ENCODE measurements at regions of chr16 and their contacts with region 1.

Region 1: DNA sequence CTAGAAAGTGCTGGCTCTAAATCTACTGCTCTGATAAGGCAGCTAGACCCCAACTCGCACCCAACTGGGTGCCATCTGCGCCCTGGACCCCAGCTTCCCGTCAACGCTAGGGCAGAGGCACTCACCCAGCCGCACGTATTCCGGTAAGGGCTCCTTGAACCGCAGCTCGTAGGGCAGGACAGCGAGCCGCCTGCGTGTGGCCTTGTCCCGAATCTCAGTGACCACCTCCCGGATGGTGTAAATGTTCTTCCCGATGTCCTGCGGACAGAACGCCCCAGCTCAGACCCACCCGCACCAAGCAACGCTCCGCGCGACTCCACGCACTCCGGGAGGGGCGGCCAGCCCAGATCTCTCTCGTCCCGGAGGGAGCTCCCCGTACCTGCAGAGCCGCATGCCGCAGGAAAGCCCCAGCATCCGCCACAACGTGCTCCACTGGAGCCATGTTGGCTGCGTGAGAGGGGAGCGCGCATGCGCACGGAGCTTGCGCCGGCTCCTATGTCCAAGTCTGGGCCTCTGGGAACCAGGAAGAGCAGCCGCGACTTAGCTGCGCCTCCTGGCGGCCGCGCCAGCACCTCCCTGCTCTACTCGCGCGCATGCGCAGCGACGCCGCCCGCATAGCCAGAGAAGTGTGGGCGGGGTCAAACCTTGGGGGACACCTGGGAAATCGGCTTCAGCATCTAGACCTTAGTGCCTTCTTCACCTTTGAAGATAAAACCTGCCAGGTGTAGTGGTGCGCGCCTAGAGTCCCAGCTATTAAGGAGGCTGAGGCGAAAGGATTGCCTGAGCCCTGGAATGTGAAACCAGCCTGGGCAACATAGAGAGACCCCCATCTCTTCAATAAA is at the start of gene NOB1:
- DNase-seq: peak; percentile 97 to 100 (median 98)
- ATAC-seq: peak; percentile 99
- H3K4me3 ChIP-seq: peak within 1 kb of the TSS; percentile 64 to 91
- H3K27ac ChIP-seq: peak within 1 kb of the TSS in 1 of 2 donors; percentile 75
- H3K4me1 ChIP-seq: peaks cover 11 to 29% of the 10 kb centered on the region in 2 donors
- H3K27me3 ChIP-seq: no peaks in the 10 kb centered on the region
- CTCF ChIP-seq: peak; percentile 94 to 98
- polyA plus RNA-seq, gene NOB1: 61.2 to 67.4 (median 63.0) TPM

Region 2: GRCh38 chr16:69396187-69397061 is 358.3 kb before region 1 on chr16:
- intact Hi-C with region 1: loop called in 1 of 2 experiments (anchors 10 kb)
- DNase-seq: peak in 3 of 4 donors; percentile 63 to 93 (median 87)
- ATAC-seq: peak; percentile 88
- H3K4me3 ChIP-seq: no peak overlapping the region
- H3K27ac ChIP-seq: peak overlapping the region; percentile 81 to 84
- H3K4me1 ChIP-seq: peaks cover 21 to 40% of the 10 kb centered on the region in 2 donors
- H3K27me3 ChIP-seq: no peaks in the 10 kb centered on the region
- CTCF ChIP-seq: peak; percentile 3 to 5

Region 3: DNA sequence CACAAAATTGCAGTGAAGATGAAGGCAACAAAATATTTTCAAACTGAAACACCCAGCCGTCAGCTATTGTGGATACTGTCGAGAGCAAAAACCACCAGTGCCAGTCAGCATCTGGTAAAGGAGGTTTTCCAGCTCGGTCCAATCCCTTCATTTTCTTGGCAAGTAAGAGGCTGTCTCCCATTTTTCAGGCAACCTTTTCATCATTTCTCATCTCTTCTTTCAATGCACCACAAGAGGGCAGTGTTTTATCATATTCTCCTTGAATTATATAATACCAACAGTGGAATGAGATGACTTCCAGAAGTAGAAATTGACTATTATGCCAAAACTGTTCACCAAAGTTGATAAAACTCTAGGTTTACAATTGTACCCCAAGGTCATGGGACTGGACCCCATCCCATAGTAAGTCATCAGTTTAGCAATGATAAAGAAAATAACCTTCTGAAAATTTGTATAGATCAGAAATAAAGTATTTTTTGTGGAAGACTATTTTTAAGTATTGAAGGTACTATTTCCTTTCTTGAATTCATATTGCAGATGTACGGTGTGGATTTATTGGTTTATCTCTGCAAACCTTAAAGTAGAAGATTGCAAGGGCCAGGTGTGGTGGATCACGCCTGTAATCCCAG is 45.1 kb before region 1 on chr16:
- intact Hi-C with region 1: loop called in 1 of 2 experiments (anchors 10 kb)
- DNase-seq: peak in 2 of 4 donors; percentile 49 to 64
- ATAC-seq: peak; percentile 61
- H3K4me3 ChIP-seq: no peak overlapping the region
- H3K27ac ChIP-seq: no peak overlapping the region
- H3K4me1 ChIP-seq: peaks cover 2 to 5% of the 10 kb centered on the region in 2 donors
- H3K27me3 ChIP-seq: no peaks in the 10 kb centered on the region
- CTCF ChIP-seq: peak; percentile 55 to 57